MCF 10A (cell line): ENCODE measurements at regions of chr12 and their contacts with region 1.

Region 1: GRCh38 chr12:1698638-1699214 is 7.9 kb downstream of the ADIPOR2 start:
- DNase-seq: no peak
- H3K4me3 Mint-ChIP-seq: no peak overlapping the region
- H3K27ac Mint-ChIP-seq: no peak overlapping the region
- H3K4me1 Mint-ChIP-seq: peaks cover 25% of the 10 kb centered on the region
- H3K27me3 Mint-ChIP-seq: no peaks in the 10 kb centered on the region
- CTCF ChIP-seq: no peak

Region 2: DNA sequence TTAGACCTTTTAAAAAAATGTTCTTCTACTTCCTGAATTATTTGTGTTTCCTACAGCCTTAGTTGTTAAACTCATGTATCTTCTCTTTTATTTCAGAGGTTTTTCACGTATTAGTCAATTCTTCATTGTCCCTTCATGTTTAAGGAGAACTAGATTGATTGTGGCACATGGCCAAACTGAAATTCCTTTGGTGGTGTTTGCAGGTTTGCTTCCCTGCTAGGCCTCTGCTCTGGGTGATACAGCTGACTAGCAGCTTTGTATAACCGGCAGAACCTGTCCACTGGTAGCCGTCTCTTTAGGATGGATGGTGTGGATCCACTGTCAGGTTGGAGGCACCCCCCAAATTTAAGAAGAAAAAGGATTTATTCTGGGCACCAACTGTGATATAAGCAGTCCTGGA is 366.4 kb before region 1 on chr12:
- CTCF ChIA-PET with region 1: no interaction called
- POLR2A ChIA-PET with region 1: no interaction called
- intact Hi-C with region 1: no loop called
- DNase-seq: no peak
- H3K4me3 Mint-ChIP-seq: no peak overlapping the region
- H3K27ac Mint-ChIP-seq: no peak overlapping the region
- H3K4me1 Mint-ChIP-seq: peaks cover 14% of the 10 kb centered on the region
- H3K27me3 Mint-ChIP-seq: no peaks in the 10 kb centered on the region
- CTCF ChIP-seq: no peak

Region 3: GRCh38 chr12:1583421-1584078 is 115.2 kb before region 1 on chr12:
- CTCF ChIA-PET with region 1: no interaction called
- POLR2A ChIA-PET with region 1: no interaction called
- intact Hi-C with region 1: no loop called
- DNase-seq: peak; percentile 84
- H3K4me3 Mint-ChIP-seq: no peak overlapping the region
- H3K27ac Mint-ChIP-seq: no peak overlapping the region
- H3K4me1 Mint-ChIP-seq: peaks cover 16% of the 10 kb centered on the region
- H3K27me3 Mint-ChIP-seq: no peaks in the 10 kb centered on the region
- CTCF ChIP-seq: peak; percentile 82

Region 4: GRCh38 chr12:1650260-1650977 is 48.3 kb before region 1 on chr12:
- CTCF ChIA-PET with region 1: interaction called, 13 read pairs
- POLR2A ChIA-PET with region 1: no interaction called
- intact Hi-C with region 1: no loop called
- DNase-seq: no peak
- H3K4me3 Mint-ChIP-seq: no peak overlapping the region
- H3K27ac Mint-ChIP-seq: no peak overlapping the region
- H3K4me1 Mint-ChIP-seq: peaks cover 2% of the 10 kb centered on the region
- H3K27me3 Mint-ChIP-seq: peaks cover 10% of the 10 kb centered on the region
- CTCF ChIP-seq: no peak